Activated T-helper 2 cell treated with anti-CD3 and anti-CD28 coated beads, Interferon-gamma antibody, Interleukin-2, Interleukin-4, amounts not matched to agents 10 μg/mL and 5 μg/mL and 100 μg/mL, durations not matched to agents 14 hours and 24 hours and 36 hours (primary cell): ENCODE measurements at regions of chr15 and their contacts with region 1.

Region 1: GRCh38 chr15:67815036-67815592 is 10.2 kb upstream of the SKOR1 start:
- DNase-seq: no peak
- H3K4me3 Mint-ChIP-seq: no peak overlapping the region
- H3K27ac Mint-ChIP-seq: no peak overlapping the region
- H3K4me1 Mint-ChIP-seq: no peaks in the 10 kb centered on the region
- H3K27me3 Mint-ChIP-seq: peaks cover 33% of the 10 kb centered on the region

Region 2: DNA sequence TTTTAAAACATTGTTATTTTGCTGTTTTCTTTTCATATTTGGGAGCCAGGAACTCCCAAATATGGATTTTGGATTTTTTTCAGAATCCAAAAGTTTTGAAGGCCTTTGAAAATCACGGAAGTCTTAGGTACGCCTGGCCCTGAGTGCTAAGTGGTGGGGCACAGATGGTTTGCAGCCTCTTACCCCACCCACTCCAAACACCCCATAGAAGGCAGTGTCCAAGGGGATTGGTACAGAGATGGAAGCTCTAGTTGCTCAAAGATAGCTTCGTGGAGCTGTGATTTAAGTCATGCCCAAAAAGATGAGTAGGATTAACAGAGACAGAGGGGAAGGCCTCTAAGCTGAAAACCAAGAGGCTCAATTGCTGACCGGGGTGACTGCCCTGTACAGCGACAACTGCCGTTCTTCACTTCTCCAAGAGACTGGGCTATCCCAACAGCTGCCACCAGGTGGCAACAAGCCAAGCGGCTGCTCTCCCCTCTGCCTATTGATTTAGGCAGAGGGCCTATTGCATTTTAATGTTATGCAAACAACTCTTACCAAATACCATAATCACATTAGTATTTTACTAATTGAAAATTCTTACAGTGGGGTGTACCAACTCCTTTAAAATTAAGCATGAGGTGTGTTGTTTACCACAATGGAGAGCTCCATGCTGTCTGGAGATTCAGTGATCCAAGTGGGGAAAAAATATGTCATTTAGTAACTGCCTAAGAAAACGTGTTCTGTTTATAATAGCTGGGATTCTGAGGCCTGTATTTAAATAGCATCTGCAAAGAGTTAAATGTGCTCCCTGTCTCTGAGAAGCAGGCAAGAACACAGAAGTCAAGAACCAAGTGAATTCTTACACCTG is 358.2 kb before region 1 on chr15:
- intact Hi-C with region 1: loop called (anchors 5 kb)
- DNase-seq: peak; percentile 70
- H3K4me3 Mint-ChIP-seq: no peak overlapping the region
- H3K27ac Mint-ChIP-seq: no peak overlapping the region
- H3K4me1 Mint-ChIP-seq: peaks cover 5% of the 10 kb centered on the region
- H3K27me3 Mint-ChIP-seq: peaks cover 24% of the 10 kb centered on the region

Region 3: DNA sequence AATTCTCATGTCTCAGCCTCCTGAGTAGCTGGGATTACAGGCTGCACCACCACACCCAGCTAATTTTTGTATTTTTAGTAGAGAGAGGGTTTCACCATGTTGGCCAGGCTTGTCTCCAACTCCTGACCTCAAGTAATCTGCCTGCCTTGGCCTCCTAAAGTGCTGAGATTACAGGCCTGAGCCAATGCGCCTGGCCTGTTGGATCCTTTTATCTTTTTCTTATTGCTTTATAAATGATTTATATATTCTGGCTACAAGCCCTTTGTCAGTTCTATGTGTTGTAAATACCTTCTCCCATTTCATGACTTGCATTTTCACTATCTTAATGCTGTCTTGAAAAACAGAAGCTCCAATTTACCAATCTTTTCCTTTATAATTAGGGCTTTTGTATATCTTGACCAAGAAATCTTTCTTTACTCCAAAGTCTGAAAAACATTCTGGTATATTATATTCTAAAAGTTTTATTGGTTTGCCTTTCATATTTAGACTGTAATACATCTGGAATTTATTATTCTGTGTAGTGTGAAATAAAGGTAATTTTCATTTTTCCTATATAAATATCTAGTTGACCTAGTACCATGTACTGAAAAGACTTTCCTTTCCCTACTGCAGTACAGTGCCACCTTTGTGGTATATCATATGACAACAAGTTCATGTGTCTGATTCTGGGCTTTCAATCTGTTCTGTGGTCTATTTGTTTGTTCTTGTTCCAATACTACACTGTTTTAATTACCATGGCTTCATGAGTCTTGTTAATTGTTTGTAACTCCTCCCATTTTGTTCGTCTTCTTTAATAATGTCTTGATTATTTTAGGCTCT is 77.7 kb after region 1 on chr15:
- intact Hi-C with region 1: no loop called
- DNase-seq: no peak
- H3K4me3 Mint-ChIP-seq: no peak overlapping the region
- H3K27ac Mint-ChIP-seq: no peak overlapping the region
- H3K4me1 Mint-ChIP-seq: peaks cover 5% of the 10 kb centered on the region
- H3K27me3 Mint-ChIP-seq: peaks cover 16% of the 10 kb centered on the region